Sigmoid colon (tissue), 7 donors: ENCODE measurements at regions of chr11 and their contacts with region 1.

Region 1: GRCh38 chr11:14892036-14892567 is at the start of gene CYP2R1:
- DNase-seq: peak; percentile 97
- H3K4me3 ChIP-seq: peak within 1 kb of the TSS; percentile 69 to 88 (median 78)
- H3K27ac ChIP-seq: peak within 1 kb of the TSS; percentile 89 to 95 (median 92)
- H3K4me1 ChIP-seq: peaks cover 4 to 24% (median 10%) of the 10 kb centered on the region in 4 donors
- H3K27me3 ChIP-seq: no peaks in the 10 kb centered on the region
- CTCF ChIP-seq: no peak
- EP300 ChIP-seq: no peak
- POLR2A ChIP-seq: peak in 1 of 2 donors; percentile 64
- total RNA-seq, gene CYP2R1: 6.1 to 17.5 (median 13.8) TPM

Region 2: DNA sequence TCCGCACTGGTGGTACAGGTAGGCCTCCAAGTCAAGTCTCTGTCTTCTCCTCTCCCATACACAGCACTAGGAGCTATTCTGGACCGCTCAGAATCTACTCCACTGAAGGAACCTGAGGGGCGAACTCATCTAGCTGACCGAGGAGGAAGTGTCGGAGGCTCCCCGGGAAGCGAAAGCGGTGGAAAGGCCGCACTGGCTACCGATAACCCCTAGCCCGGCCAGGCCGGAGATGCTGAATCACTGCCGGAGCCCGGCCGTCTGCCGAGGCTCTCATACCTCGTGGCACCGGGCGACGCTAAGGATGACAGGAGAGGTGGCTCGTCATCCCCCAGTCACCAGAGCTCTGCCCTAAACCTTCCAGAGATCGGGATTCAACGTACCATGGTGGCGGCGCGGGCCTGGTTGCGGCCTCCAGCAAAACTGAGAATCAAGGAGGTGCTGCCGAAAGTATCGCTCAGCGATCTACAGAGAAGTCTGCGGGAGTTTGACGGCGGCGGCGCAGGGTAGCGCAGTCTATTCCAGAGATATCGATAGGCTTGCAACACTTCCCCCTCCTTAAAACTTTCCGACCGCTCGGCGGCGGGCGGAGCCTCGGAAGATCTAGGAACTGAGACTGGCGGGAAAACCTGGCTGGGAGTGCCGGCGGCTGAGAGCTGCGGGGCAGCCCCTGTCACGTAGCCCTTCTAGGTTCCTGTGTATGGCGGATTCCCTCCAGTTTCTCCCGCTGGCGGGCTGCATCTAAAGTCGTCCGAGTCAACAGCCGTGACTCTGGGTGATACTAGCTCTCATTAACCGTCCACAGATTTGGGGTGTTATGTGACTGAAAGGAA is 372.0 kb before region 1 on chr11 and contains the start of gene PSMA1:
- intact Hi-C with region 1: loop called (anchors 1 kb)
- DNase-seq: peak; percentile 97
- H3K4me3 ChIP-seq: peak within 1 kb of the TSS; percentile 74 to 87 (median 79)
- H3K27ac ChIP-seq: peak within 1 kb of the TSS; percentile 87 to 90 (median 88)
- H3K4me1 ChIP-seq: peaks cover 0 to 23% (median 19%) of the 10 kb centered on the region in 4 donors
- H3K27me3 ChIP-seq: no peaks in the 10 kb centered on the region
- CTCF ChIP-seq: peak; percentile 44 to 73 (median 60)
- EP300 ChIP-seq: peak in 1 of 4 donors; percentile 15
- POLR2A ChIP-seq: peak; percentile 37 to 58
- total RNA-seq, gene PSMA1: 109 to 137 (median 123) TPM

Region 3: GRCh38 chr11:14537134-14537599 is 354.9 kb before region 1 on chr11:
- intact Hi-C with region 1: loop called (anchors 5 kb)
- DNase-seq: no peak
- H3K4me3 ChIP-seq: no peak overlapping the region
- H3K27ac ChIP-seq: peak overlapping the region in 3 of 4 donors; percentile 57 to 73 (median 73)
- H3K4me1 ChIP-seq: peaks cover 0 to 49% (median 46%) of the 10 kb centered on the region in 4 donors
- H3K27me3 ChIP-seq: no peaks in the 10 kb centered on the region
- CTCF ChIP-seq: peak; percentile 55 to 84 (median 72)
- EP300 ChIP-seq: no peak
- POLR2A ChIP-seq: no peak

Region 4: DNA sequence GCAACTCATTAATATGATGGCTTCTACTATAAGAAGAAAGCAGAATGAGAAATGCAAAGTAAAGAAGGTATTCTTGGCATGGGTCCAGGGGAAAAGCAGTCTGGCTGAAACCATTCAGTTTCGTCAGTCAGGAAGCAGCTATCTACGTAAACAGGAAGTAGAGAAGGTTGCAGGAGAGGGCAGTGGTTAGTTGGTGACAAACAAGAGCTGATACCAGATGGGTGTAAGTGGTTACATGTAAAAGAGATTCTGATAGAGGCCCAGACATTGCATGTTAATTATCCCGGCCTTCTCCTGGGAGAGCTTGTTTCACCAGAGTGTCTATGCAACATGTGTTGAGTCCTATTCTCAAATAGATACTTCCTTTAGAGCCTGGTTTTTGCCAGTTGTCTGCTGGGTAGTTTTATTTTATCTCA is 313.6 kb before region 1 on chr11:
- intact Hi-C with region 1: no loop called
- DNase-seq: no peak
- H3K4me3 ChIP-seq: no peak overlapping the region
- H3K27ac ChIP-seq: no peak overlapping the region
- H3K4me1 ChIP-seq: peaks cover 0 to 7% (median 0%) of the 10 kb centered on the region in 4 donors
- H3K27me3 ChIP-seq: no peaks in the 10 kb centered on the region
- CTCF ChIP-seq: no peak
- EP300 ChIP-seq: no peak
- POLR2A ChIP-seq: no peak

Region 5: GRCh38 chr11:14789879-14790484 is 102.1 kb before region 1 on chr11:
- intact Hi-C with region 1: loop called (anchors 5 kb)
- DNase-seq: no peak
- H3K4me3 ChIP-seq: no peak overlapping the region
- H3K27ac ChIP-seq: no peak overlapping the region
- H3K4me1 ChIP-seq: peaks cover 0 to 3% (median 0%) of the 10 kb centered on the region in 4 donors
- H3K27me3 ChIP-seq: no peaks in the 10 kb centered on the region
- CTCF ChIP-seq: peak in 1 of 4 experiments; percentile 22
- EP300 ChIP-seq: no peak
- POLR2A ChIP-seq: no peak

Region 6: GRCh38 chr11:14956111-14956510 is 64.0 kb after region 1 on chr11:
- intact Hi-C with region 1: no loop called
- DNase-seq: no peak
- H3K4me3 ChIP-seq: no peak overlapping the region
- H3K27ac ChIP-seq: no peak overlapping the region
- H3K4me1 ChIP-seq: no peaks in the 10 kb centered on the region
- H3K27me3 ChIP-seq: no peaks in the 10 kb centered on the region
- CTCF ChIP-seq: no peak
- EP300 ChIP-seq: no peak
- POLR2A ChIP-seq: no peak